G401 (cell line): ENCODE measurements at regions of chr16 and their contacts with region 1.

Region 1: DNA sequence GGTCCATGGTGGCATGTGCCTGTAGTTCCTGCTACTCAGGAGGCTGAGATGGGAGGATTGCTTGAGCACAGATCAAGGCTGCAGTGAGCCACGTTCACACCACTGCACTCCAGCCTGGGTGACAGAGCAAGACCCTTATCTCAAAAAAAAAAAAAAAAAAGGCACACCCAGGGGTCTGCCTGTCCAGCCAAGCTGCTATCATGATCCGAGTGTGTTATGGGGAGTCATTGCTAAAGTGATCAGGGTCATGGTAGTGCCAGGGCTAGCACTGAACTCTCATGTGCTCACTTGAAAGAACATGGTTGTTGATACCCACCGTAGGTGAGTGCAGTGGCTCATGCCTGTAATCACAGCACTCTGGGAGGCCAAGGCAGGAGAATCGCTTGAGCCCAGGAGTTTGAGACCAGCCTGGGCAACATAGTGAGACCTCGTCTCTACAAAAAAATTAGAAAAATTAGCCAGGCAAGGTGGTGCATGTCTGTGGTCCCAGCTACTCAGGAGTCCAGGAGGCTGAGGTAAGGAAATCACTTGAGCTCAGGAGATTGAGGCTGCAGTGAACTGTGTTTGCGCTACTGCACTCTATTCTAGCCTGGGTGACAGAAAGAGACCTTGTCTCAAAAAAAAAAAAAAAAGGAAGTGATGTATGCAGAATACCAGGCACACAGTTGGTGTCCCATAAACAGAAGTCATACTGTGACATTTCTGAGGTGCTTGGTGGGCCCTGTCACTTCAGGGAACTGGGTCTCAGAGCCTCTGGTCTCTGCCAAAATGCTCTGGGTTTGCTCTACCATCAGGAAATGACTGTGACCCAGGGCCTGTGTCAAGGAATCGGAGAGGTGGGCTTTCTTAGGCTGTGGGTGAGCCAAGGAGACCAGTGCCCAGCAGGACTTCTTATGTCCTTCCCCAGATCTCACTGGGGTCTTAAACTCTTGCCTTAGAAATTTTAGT is 2.2 kb downstream of the PRM1 start:
- DNase-seq: no peak

Region 2: DNA sequence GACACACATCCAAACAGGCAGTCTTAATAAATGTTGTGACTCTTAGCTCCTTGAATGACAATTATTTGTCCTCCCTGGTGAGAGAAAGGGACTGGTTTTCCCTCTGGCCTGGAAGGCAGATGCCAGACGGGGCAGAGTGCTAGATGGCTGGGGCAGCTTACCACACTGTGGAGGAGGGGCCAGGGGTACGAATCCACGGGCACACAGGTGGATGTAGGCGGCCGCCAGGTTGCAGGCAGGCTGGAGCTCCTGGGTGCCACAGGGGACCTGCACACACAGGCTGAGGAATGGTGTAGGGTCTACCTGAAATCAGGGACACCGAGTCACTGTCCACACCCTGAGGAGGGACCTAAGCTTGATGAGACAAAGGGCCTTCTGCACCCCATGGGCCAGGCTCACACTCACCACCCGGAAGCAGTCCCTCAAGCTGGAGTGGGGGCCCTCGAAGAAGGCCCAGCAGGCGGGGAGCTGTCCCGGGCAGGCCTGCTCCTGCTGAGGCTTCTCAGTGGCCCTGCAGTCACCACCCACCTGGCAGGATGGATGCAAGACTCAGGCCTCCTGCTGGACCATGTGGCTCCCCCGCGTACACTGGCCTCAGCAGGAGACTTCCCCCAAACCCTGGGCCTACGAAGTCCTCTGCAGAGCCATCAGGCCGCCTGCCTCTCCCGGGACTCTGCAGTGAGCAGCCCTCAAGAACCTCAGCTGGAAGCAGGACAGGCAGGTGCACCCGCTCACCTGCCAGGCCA is 104.7 kb after region 1 on chr16:
- in situ Hi-C with region 1: loop called (anchors 5 kb)
- DNase-seq: no peak